ENCODE measurements at regions of chr12 and their contacts with region 1.

Region 1: GRCh38 chr12:116864371-116865160 is 16.7 kb downstream of the HRK start:
- DNase-seq: peak; percentile 8 to 67
- H3K4me3 ChIP-seq: no peak overlapping the region
- H3K27ac ChIP-seq: peak overlapping the region in 1 of 2 donors; percentile 23
- H3K4me1 ChIP-seq: peaks cover 0 to 24% of the 10 kb centered on the region in 2 donors
- H3K27me3 ChIP-seq: no peaks in the 10 kb centered on the region
- CTCF ChIP-seq: no peak

Region 2: DNA sequence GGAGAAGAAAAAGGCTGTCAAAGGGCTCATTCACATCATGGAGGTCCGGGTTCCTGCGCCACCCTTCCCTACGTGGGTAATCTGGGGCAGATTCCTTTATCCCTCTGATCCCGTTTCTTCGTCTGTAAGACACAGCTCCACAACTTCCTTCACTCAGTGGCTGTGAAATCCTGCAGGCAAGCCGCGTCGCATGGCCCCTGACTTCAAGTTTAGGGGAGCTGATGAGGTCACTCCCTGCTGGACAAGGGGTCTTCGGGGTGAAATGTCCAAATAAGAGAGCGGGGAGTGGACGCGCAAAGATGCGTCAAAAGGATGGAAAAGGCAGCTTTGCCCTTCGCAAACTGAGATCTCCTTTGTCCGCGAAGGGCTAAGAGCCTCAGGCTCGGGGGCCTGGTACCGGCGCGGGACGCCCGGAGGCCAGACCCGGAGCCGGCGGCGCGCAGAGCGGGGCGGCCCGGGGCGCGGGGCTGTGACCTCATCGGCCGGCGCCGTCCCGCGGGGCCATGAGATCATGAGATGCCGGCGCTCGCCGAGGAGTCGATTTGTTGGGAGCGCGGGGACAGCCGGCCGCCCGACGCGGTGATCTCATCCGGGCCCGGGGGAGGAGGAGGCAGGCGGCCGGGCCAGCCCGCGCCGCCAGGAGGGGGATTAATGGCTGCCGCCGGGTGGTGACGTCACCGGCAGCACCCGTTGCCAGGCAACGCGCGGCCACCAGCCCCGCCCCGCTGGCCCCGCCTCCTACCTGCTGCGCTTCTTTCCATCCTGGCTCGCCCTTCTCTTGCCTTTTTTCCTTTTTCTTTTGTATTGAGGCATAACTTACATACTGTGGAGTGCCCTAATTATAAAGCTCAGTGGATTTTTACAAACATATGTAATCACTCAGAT is 45.4 kb before region 1 on chr12:
- intact Hi-C with region 1: loop called (anchors 2 kb)
- DNase-seq: peak; percentile 55 to 96
- H3K4me3 ChIP-seq: peak overlapping the region; percentile 75 to 82
- H3K27ac ChIP-seq: peak overlapping the region; percentile 92 to 97
- H3K4me1 ChIP-seq: peaks cover 3 to 9% of the 10 kb centered on the region in 2 donors
- H3K27me3 ChIP-seq: no peaks in the 10 kb centered on the region
- CTCF ChIP-seq: no peak

Region 3: DNA sequence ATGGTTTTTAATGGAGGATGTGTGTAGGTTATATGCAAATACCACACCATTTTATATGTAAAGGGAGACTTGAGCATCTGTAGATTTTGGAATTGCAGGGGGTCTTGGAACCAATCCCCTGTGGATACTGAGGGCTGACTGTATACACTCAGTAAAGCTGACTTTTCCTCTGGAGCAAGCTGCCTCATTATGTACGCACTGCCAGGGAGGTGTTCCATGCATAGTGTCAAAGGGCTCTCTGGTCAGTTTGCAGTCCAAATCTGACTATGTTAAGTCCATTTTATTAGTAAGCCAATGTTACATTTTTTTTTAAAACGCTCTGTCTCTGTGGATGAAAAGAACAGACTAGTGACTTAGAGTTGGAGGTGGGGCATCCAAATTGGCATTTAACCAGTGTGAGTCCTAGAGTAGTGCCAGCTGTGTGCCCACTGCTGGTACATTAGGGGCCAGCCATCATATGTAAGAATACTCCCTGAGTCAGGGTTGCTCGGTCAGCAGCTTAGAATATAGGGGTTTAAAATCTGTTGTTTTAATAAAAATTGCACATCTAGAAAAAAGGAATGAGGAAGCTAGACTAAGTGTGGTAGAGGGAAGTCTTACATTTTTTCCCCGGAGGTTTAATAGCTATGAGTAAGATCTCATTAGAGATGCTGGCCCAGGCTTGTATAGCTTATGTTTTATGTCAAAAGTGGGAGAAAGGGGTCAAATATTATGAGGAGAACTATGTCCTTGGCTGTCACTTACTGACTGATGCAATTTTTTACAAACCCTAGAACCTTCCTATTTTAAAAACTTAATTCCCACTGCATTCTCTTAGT is 147.6 kb after region 1 on chr12:
- intact Hi-C with region 1: no loop called
- DNase-seq: no peak
- H3K4me3 ChIP-seq: no peak overlapping the region
- H3K27ac ChIP-seq: no peak overlapping the region
- H3K4me1 ChIP-seq: no peaks in the 10 kb centered on the region
- H3K27me3 ChIP-seq: no peaks in the 10 kb centered on the region
- CTCF ChIP-seq: no peak

Measured in ascending aorta (tissue), 2 donors.